Heart left ventricle (tissue), 16 donors: ENCODE measurements at regions of chr1 and their contacts with region 1.

Region 1: DNA sequence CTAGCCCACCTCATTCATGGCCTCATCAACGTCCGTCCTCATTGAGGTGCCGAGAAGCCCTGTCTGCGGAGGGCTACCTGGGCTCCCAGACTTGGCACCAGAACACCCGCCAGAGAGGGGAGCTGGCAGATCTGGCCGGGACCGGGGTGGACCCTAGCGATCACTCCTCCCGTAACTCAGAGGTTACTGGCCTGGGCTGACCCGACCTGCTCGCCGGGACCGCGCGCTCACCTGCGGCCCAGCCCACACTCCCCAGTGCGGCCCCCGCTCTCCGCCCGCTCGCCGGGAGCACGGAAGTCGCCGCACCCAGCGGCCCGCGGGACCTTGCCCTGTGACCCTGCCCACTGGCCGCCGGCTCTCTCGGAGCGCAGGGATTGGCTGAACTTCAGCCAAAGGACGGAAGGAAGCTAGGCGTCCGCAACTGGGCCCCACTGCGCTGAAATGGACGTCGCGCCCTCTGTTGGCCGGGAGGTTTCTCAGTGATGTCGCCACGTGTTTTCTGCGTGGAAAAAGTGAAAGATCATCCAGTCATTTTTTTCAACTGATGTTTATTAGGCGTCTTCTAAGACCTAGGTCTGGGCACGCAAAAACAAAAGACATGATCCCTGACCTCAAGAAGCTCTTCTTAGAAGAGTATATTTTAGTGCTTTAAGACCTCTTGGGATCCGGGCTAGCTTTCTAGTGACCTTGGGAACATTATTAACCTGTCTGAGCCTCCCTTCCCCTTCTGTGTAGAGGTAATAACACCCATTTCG is at the start of gene SMIM12:
- DNase-seq: peak; percentile 95 to 97 (median 96)
- ATAC-seq: peak; percentile 91 to 99 (median 98)
- H3K4me3 ChIP-seq: peak within 1 kb of the TSS; percentile 77 to 98 (median 93)
- H3K27ac ChIP-seq: peak within 1 kb of the TSS; percentile 84 to 97 (median 90)
- H3K4me1 ChIP-seq: peaks cover 4 to 33% (median 20%) of the 10 kb centered on the region in 12 donors
- H3K27me3 ChIP-seq: no peaks in the 10 kb centered on the region
- CTCF ChIP-seq: peak; percentile 77 to 95 (median 88)
- POLR2A ChIP-seq: peak in 1 of 2 donors; percentile 91
- total RNA-seq, gene SMIM12: 33.5 to 52.4 (median 37.8) TPM

Region 2: GRCh38 chr1:34597877-34598514 is 261.6 kb before region 1 on chr1:
- intact Hi-C with region 1: no loop called
- DNase-seq: peak; percentile 32 to 71 (median 51)
- ATAC-seq: peak in 3 of 4 donors; percentile 54 to 80 (median 67)
- H3K4me3 ChIP-seq: no peak overlapping the region
- H3K27ac ChIP-seq: no peak overlapping the region
- H3K4me1 ChIP-seq: no peaks in the 10 kb centered on the region
- H3K27me3 ChIP-seq: peaks cover 0 to 35% (median 10%) of the 10 kb centered on the region in 9 donors
- CTCF ChIP-seq: peak; percentile 40 to 76 (median 64)
- POLR2A ChIP-seq: no peak

Region 3: DNA sequence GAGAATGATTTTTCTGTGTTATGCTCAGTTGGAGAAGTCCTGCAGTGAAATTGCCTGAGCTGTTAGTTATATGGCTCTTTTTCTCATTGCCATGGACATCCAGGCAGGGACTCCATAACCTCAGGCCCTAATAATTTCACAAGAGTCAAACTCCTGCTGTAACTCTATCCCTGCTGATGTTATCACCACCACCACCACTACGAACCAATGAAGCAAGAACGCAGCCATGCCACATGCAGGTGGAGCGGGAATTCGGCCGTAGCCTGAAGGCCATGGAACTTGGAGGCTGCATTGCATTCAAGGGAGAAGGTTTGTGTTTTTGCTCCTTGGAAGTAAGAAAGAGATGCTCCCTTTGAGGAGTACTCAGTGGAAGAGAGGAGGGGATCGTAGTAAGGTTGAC is 86.6 kb after region 1 on chr1:
- intact Hi-C with region 1: no loop called
- DNase-seq: no peak
- ATAC-seq: no peak
- H3K4me3 ChIP-seq: no peak overlapping the region
- H3K27ac ChIP-seq: no peak overlapping the region
- H3K4me1 ChIP-seq: no peaks in the 10 kb centered on the region
- H3K27me3 ChIP-seq: peaks cover 0 to 15% (median 0%) of the 10 kb centered on the region in 9 donors
- CTCF ChIP-seq: no peak
- POLR2A ChIP-seq: no peak

Region 4: DNA sequence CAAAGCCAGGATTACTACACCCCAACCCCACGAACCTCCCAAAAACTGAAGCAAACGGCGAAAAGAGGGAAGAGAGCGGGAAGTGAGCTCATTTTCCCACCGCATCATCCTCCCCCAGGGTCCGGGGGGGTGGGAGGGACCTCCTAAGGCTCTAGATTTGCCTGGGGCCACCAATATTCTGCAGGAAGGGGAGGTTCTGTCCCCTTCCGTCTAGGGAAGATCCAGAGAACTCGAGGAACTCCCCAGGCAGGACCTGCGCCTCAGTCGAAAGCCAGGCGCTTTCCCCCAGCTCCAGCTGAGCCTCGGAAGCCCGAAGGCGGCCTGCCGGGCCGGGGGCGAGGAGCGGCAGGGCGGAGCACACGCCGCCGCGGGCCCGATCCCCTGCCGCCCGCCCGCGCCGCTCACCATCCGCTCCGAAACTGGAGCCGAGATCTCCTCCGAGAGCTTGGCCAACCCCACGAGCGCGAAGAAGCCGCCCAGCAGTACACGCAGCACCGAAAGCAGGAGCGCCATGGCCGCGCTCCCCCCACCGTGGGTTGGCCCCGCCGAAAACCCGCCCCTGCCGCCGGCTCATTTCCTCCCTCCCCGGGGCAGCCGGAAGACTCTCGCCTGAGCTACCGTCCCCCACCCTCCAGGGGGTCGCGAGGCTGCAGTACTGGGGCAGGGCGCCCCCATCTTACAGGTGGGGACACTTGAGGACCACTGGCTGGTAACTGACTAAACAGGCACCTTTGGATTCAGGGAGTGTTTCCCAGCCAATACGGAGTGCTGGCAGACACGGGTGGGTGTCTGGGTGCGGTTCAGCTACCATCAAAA is 125.4 kb after region 1 on chr1 and contains the start of gene TMEM35B:
- intact Hi-C with region 1: loop called in 2 of 10 experiments (anchors 10 kb)
- DNase-seq: peak; percentile 75 to 90 (median 80)
- ATAC-seq: peak; percentile 68 to 95 (median 92)
- H3K4me3 ChIP-seq: peak within 1 kb of the TSS; percentile 52 to 99 (median 80)
- H3K27ac ChIP-seq: peak within 1 kb of the TSS; percentile 72 to 98 (median 92)
- H3K4me1 ChIP-seq: peaks cover 0 to 29% (median 18%) of the 10 kb centered on the region in 12 donors
- H3K27me3 ChIP-seq: no peaks in the 10 kb centered on the region
- CTCF ChIP-seq: peak in 2 of 12 donors; percentile 11 to 12
- POLR2A ChIP-seq: peak in 1 of 2 donors; percentile 72
- total RNA-seq, gene TMEM35B: 4.0 to 19.9 (median 8.6) TPM